ENCODE measurements at regions of chr9 and their contacts with region 1.

Region 1: DNA sequence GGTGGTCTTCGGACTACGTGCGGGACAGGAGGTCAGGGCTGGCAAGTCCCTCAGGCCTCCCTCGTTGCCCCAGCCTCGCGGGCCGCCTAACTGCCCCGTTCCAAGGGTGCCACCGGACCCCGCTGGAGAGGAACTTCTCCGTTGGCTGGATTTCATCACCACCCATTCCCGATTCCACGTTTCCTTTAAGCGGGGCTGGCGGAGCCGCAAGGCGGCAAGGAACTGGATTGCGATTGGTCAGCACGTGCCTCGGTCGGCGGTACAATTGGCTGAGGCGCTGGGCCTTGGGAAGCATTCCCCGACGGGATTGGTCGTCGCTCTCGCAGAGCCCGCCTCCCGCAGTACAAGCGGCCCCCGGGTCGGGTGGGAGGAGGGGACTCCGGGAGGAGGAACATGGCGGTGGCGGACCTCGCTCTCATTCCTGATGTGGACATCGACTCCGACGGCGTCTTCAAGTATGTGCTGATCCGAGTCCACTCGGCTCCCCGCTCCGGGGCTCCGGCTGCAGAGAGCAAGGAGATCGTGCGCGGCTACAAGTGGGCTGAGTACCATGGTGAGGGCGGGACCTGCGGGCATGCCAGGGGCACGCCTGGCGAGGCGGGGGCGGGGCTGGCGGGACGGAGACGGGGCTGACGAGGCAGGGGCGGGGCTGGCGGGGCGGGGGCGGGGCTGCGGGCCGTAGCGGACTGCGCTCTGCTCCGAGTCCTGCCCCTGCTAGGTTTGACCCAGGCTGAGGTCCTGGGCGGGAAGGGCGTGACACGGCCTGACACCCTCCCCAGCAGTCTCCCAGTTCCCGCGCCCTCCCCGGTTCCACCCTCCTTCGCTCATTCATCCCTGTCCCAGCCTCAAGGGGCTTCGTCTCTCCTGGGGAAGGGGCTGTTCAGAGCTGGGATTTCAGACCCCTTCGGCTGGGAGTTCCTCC is at the start of gene PHPT1:
- DNase-seq: peak; percentile 97
- H3K4me3 Mint-ChIP-seq: peak within 1 kb of the TSS; percentile 96
- H3K27ac Mint-ChIP-seq: peak within 1 kb of the TSS; percentile 91
- H3K4me1 Mint-ChIP-seq: peaks cover 6% of the 10 kb centered on the region
- H3K27me3 Mint-ChIP-seq: peaks cover 9% of the 10 kb centered on the region
- total RNA-seq, gene PHPT1: 127 and 133 TPM in 2 replicates

Region 2: DNA sequence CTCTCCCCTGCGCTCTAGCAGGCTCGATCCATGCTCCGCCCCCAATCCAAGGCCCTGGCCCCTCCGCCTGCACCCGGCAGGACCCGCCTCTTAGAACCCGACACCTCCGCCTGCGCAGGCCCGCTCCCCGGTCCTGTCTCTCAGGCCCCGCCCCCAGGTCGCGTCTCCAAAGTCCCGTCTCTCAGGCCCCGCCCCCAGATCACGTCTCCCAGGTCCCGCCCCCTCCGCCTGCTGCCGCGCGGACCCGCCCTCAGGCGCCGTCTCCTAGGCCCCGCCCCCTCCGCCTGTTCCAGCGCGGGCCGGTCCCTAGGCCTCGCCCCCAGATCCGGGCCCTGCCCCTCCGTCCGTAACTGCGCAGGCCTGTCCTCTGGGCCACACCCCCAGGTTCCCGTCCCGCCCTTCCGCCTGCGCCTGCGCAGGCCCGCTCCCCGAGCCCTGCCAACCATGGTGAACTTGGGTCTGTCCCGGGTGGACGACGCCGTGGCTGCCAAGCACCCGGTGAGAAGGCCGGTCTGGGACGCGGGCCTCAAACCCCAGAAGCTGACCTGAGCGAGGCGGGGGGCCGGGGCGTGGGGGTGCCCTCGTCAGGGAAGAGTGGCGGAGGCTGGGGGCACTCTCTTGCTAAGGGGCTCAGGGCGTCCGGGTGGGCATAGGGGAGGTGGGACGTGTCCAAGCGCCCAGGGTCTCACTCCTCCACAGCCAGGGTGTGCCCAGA is 58.2 kb before region 1 on chr9 and contains the start of gene TMEM141:
- intact Hi-C with region 1: loop called (anchors 2 kb)
- DNase-seq: peak; percentile 100
- H3K4me3 Mint-ChIP-seq: peak within 1 kb of the TSS; percentile 80
- H3K27ac Mint-ChIP-seq: peak within 1 kb of the TSS; percentile 80
- H3K4me1 Mint-ChIP-seq: peaks cover 23% of the 10 kb centered on the region
- H3K27me3 Mint-ChIP-seq: peaks cover 6% of the 10 kb centered on the region
- total RNA-seq, gene TMEM141: 34.4 and 34.7 TPM in 2 replicates

Region 3: GRCh38 chr9:136865735-136866103 is 16.4 kb after region 1 on chr9:
- intact Hi-C with region 1: no loop called
- DNase-seq: no peak
- H3K4me3 Mint-ChIP-seq: peak overlapping the region; percentile 86
- H3K27ac Mint-ChIP-seq: peak overlapping the region; percentile 63
- H3K4me1 Mint-ChIP-seq: peaks cover 9% of the 10 kb centered on the region
- H3K27me3 Mint-ChIP-seq: no peaks in the 10 kb centered on the region

Region 4: DNA sequence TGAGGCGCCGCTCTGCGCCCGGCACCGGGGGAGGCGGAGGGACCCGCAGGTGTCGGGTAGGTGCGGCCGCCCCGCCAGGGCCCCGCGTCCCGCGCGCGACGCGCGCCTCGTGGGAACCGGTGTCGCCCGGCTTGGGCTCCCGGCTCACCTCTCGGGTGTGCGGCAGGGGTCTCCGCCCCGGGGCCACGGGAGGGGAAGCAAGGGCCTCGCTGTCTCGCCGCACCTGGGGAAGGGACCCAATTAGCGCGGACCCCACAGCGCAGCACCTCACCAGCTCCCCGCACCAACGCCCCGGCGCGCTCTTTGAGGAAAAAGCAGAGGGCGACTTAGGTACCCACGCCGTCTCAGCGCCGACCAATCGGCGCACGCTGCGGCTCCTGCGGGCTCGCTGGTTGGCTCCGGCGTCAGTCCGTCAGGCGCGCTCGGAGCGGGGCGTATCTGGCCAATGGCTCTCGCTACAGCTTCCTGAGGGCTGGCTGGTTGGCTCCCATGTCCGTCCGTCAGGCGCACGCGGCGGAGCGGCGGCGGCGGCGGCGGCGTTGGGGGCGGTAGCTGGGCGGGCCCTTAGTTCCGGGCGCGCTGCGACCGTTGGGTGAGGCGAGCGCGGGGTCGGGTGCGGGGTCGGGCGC is 36.8 kb after region 1 on chr9 and contains the start of gene TRAF2:
- intact Hi-C with region 1: loop called (anchors 1 kb)
- DNase-seq: peak; percentile 99
- H3K4me3 Mint-ChIP-seq: peak within 1 kb of the TSS; percentile 97
- H3K27ac Mint-ChIP-seq: peak within 1 kb of the TSS; percentile 87
- H3K4me1 Mint-ChIP-seq: peaks cover 30% of the 10 kb centered on the region
- H3K27me3 Mint-ChIP-seq: no peaks in the 10 kb centered on the region
- total RNA-seq, gene TRAF2: 59.5 and 60.4 TPM in 2 replicates

Region 5: GRCh38 chr9:136944519-136945279 is 95.4 kb after region 1 on chr9 and contains the starts of genes C8G and FBXW5:
- intact Hi-C with region 1: loop called (anchors 2 kb)
- DNase-seq: peak; percentile 95
- H3K4me3 Mint-ChIP-seq: peak within 1 kb of the TSS; percentile 79
- H3K27ac Mint-ChIP-seq: peak within 1 kb of the TSS; percentile 82
- H3K4me1 Mint-ChIP-seq: peaks cover 3% of the 10 kb centered on the region
- H3K27me3 Mint-ChIP-seq: no peaks in the 10 kb centered on the region
- total RNA-seq, gene C8G: 0.76 and 0.89 TPM in 2 replicates
- total RNA-seq, gene FBXW5: 94.4 and 95.9 TPM in 2 replicates

Region 6: DNA sequence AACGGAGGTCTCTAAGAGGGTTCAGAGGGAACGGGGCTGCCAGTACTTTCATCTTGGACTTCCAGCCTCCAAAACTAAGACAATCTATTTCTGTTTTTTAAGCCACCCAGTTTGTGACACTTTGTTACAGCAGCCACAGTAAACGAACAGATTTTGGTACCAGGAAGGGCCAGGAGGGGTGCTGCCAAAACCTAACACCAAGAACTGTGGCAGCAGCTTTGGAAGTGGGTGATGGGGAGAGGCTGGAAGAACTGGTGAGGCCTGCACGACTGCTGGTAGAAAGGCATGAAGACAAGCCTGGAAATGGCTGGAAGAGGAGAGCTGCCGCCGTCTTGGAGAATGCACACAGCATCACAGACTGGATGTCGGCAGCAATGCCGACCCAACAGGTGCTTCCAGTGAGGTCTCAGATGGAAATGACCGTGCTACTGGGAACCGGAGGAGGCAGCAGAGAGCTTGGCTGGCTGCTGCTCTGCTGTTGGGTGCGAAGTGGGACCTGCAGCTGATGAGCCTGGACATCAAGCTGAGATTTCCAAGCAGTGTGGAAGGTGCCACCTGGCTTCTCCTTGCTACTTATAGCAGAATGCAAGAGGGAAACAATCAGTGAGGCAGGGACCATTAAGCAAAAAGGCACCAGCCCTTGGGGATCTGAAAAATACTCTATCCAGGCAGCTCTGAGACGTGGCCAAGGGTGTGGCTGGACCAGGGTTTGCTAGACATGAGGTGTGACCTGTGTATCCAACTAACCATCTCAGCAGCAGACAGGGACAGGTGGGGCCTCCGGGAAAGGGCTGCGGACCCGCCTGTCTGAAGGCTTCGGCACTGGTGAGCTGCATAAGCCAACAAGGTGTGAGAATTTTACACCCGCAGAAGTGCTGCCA is 327.2 kb after region 1 on chr9:
- intact Hi-C with region 1: loop called (anchors 10 kb)
- DNase-seq: no peak
- H3K4me3 Mint-ChIP-seq: no peak overlapping the region
- H3K27ac Mint-ChIP-seq: no peak overlapping the region
- H3K4me1 Mint-ChIP-seq: no peaks in the 10 kb centered on the region
- H3K27me3 Mint-ChIP-seq: peaks cover 5% of the 10 kb centered on the region

Measured in activated T-helper 2 cell treated with anti-CD3 and anti-CD28 coated beads, Interferon-gamma antibody, Interleukin-2, Interleukin-4, amounts not matched to agents 10 μg/mL and 5 μg/mL and 100 μg/mL, durations not matched to agents 14 hours and 24 hours and 36 hours (primary cell).